Caco-2 (cell line): ENCODE measurements at regions of chr12 and their contacts with region 1.

Region 1: DNA sequence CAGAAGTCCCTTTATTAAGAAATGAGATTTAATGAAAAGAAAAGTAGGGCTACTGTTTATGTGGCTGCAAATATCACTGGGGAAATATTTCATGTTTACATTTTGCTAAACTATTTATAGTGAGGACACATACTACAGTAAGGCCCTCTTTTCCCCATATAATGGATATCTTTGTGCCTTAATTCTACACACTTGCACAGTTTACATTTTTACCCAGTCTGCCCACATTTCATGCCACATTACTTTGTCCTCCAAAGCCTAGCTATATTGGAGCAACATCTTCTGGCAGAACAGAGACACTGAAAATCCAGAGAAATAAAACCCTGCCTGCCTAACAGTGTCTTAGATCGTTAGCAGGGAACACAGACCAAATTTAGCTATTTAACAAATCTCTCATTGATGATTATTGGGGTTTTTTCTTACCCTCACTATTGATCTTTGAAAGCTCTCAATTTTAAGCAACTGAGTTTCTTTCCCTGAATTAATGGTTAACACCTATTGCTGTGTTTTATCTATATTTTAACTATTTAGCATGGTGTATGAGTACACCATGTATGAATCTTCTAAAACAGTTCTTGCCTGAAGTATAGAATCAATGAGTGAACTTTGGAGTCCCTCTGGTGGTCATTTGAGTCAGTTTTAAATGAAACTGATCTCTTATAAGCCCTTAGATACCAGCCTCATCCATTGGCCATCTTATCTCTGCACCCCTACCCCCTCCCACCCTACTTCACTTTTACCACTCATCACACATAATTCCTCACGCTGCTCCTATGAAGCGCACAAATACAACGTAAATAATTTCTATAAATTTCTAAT is 170.2 kb downstream of the BCAT1 start:
- DNase-seq: peak in 1 of 2 experiments; percentile 65
- H3K4me3 ChIP-seq: no peak overlapping the region
- H3K4me3 Mint-ChIP-seq: no peak overlapping the region
- H3K27ac Mint-ChIP-seq: peak overlapping the region; percentile 42
- H3K4me1 ChIP-seq: peaks cover 24% of the 10 kb centered on the region
- H3K4me1 Mint-ChIP-seq: peaks cover 37% of the 10 kb centered on the region
- H3K27me3 ChIP-seq: no peaks in the 10 kb centered on the region
- H3K27me3 Mint-ChIP-seq: no peaks in the 10 kb centered on the region
- CTCF ChIP-seq: peak; percentile 72 to 90

Region 2: DNA sequence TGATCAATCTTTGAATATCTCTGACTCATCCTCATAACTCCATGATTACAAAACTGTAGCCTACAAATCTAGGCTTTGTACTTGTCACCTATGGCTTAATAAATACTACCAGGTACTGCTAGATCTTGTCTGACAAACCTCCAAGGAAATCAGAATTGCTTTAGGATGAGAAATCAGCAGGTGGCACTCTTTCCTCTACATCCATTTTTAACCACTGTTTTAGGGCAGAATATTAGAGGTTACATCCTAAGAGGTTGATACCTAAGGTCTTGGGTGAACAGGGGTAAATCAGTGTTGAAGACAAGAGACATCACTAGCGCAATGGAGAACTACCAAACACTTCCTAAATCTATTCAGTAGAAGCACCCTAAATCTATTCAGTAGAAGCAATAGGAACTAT is 766.2 kb before region 1 on chr12:
- CTCF ChIA-PET with region 1: interaction called, 3 read pairs
- POLR2A ChIA-PET with region 1: no interaction called
- intact Hi-C with region 1: loop called (anchors 1 kb)
- DNase-seq: peak in 1 of 2 experiments; percentile 47
- H3K4me3 ChIP-seq: no peak overlapping the region
- H3K4me3 Mint-ChIP-seq: no peak overlapping the region
- H3K27ac Mint-ChIP-seq: no peak overlapping the region
- H3K4me1 ChIP-seq: no peaks in the 10 kb centered on the region
- H3K4me1 Mint-ChIP-seq: no peaks in the 10 kb centered on the region
- H3K27me3 ChIP-seq: no peaks in the 10 kb centered on the region
- H3K27me3 Mint-ChIP-seq: no peaks in the 10 kb centered on the region
- CTCF ChIP-seq: peak; percentile 48 to 68

Region 3: DNA sequence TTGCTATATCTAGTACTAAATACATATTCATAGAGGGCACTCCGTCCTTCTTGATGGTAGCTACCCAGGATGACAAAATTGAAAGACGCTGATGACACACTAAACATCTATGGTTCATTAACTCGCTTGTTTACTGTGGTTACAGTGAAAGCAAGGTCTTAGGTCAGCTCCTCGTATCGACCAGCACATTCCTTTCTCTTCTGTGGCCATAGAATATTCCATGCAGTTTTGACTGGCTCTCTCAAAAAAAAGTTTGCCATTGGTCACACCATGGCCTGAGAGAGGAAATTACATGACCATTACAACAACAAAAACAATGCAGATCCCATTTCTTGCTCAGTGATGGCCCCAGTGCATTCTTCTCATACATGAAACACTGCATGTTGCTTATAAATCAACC is 417.8 kb before region 1 on chr12:
- CTCF ChIA-PET with region 1: no interaction called
- POLR2A ChIA-PET with region 1: no interaction called
- intact Hi-C with region 1: loop called (anchors 10 kb)
- DNase-seq: no peak
- H3K4me3 ChIP-seq: no peak overlapping the region
- H3K4me3 Mint-ChIP-seq: no peak overlapping the region
- H3K27ac Mint-ChIP-seq: no peak overlapping the region
- H3K4me1 ChIP-seq: peaks cover 2% of the 10 kb centered on the region; the same call in 1 of the 2 replicates
- H3K4me1 Mint-ChIP-seq: peaks cover 13% of the 10 kb centered on the region
- H3K27me3 ChIP-seq: no peaks in the 10 kb centered on the region
- H3K27me3 Mint-ChIP-seq: no peaks in the 10 kb centered on the region
- CTCF ChIP-seq: no peak

Region 4: GRCh38 chr12:24574538-24574937 is 204.2 kb before region 1 on chr12:
- CTCF ChIA-PET with region 1: interaction called, 3 read pairs
- POLR2A ChIA-PET with region 1: no interaction called
- intact Hi-C with region 1: loop called (anchors 1 kb)
- DNase-seq: no peak
- H3K4me3 ChIP-seq: no peak overlapping the region
- H3K4me3 Mint-ChIP-seq: no peak overlapping the region
- H3K27ac Mint-ChIP-seq: no peak overlapping the region
- H3K4me1 ChIP-seq: no peaks in the 10 kb centered on the region
- H3K4me1 Mint-ChIP-seq: no peaks in the 10 kb centered on the region
- H3K27me3 ChIP-seq: no peaks in the 10 kb centered on the region
- H3K27me3 Mint-ChIP-seq: no peaks in the 10 kb centered on the region
- CTCF ChIP-seq: no peak

Region 5: DNA sequence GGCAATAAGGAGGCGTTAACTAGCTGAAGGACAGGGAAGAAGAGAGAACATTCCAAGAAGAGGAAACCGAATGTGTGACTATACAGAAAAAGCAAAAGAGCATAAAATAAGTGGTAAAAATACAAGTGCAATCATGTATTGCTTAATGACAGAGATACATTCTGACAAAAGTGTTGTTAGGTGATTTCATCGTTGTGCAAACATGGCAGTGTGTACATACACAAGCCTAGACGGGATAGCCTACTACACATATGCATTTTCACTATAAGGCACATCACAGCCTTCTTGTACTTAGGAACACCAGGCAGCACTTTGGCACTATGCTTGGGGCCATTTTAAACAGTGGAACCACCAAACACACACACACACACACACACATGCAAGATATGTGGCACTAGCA is 129.1 kb before region 1 on chr12:
- CTCF ChIA-PET with region 1: no interaction called
- POLR2A ChIA-PET with region 1: no interaction called
- intact Hi-C with region 1: loop called (anchors 5 kb)
- DNase-seq: peak in 1 of 2 experiments; percentile 44
- H3K4me3 ChIP-seq: no peak overlapping the region
- H3K4me3 Mint-ChIP-seq: no peak overlapping the region
- H3K27ac Mint-ChIP-seq: peak overlapping the region; percentile 1
- H3K4me1 ChIP-seq: peaks cover 8% of the 10 kb centered on the region; the same call in 1 of the 2 replicates
- H3K4me1 Mint-ChIP-seq: peaks cover 23% of the 10 kb centered on the region
- H3K27me3 ChIP-seq: no peaks in the 10 kb centered on the region
- H3K27me3 Mint-ChIP-seq: no peaks in the 10 kb centered on the region
- CTCF ChIP-seq: no peak

Region 6: DNA sequence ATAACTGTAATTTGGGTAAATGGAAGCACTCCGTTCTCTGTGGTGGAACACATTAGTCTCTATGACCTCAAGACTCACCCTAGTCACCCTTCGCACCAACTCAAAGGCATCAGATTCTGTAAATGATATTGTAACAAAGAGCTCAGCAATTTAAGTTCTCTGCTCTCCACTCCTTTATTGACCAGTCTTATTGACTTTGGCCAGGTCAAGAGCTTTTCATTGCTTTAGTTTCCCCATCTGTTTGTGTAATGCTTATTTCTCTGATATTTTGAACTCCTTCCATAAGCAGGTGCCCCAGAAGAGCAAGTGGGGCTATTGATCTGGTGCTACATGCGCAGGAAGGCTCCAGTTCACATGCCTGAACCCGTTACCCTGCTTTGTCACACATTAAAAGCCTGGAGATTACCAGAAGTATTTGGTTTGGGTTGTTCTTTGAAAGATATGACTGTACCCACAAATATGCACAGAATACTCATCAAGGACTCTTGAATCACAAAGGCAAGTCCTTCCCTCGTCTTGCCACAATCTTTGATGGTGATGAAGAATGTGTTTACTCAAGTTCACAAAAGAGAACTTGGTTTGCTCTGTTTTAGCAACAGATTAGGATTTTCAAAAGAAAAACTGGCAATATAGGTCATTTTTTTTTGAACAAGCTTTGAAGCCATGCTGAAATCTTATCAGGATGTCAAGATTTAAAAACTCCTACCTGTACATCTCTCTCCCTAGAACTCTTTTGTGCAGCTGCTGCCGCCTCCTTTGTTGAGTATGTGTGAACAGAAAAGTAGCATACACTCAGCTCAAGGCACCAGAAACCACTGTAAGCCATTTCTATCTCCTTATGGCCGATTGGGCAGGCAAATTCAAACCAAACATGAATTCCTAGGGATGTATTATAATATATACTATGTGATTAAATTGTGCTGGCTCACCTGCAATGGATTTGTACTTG is 23.7 kb before region 1 on chr12:
- CTCF ChIA-PET with region 1: interaction called, 7 read pairs
- POLR2A ChIA-PET with region 1: interaction called, 7 read pairs
- intact Hi-C with region 1: loop called (anchors 1 kb)
- DNase-seq: peak; percentile 94 to 95
- H3K4me3 ChIP-seq: no peak overlapping the region
- H3K4me3 Mint-ChIP-seq: peak overlapping the region; percentile 70
- H3K27ac Mint-ChIP-seq: peak overlapping the region; percentile 97
- H3K4me1 ChIP-seq: peaks cover 78% of the 10 kb centered on the region
- H3K4me1 Mint-ChIP-seq: peaks cover 52% of the 10 kb centered on the region
- H3K27me3 ChIP-seq: no peaks in the 10 kb centered on the region
- H3K27me3 Mint-ChIP-seq: no peaks in the 10 kb centered on the region
- CTCF ChIP-seq: no peak